Activated CD4-positive, alpha-beta T cell treated with anti-CD3 and anti-CD28 coated beads for 36 hours (primary cell): ENCODE measurements at regions of chr2 and their contacts with region 1.

Region 1: GRCh38 chr2:43611987-43612894 is 16.4 kb upstream of the THADA start:
- DNase-seq: peak; percentile 84
- ATAC-seq: peak; percentile 96
- H3K4me3 Mint-ChIP-seq: no peak overlapping the region
- H3K27ac Mint-ChIP-seq: peak overlapping the region; percentile 40
- H3K4me1 Mint-ChIP-seq: peaks cover 2% of the 10 kb centered on the region
- H3K27me3 Mint-ChIP-seq: peaks cover 5% of the 10 kb centered on the region

Region 2: GRCh38 chr2:42828487-42829425 is 783.5 kb before region 1 on chr2:
- CTCF ChIA-PET with region 1: interaction called, 3 read pairs
- POLR2A ChIA-PET with region 1: no interaction called
- intact Hi-C with region 1: loop called in 1 of 2 experiments (anchors 2 kb)
- DNase-seq: peak; percentile 84
- ATAC-seq: peak; percentile 92
- H3K4me3 Mint-ChIP-seq: no peak overlapping the region
- H3K27ac Mint-ChIP-seq: no peak overlapping the region
- H3K4me1 Mint-ChIP-seq: peaks cover 10% of the 10 kb centered on the region
- H3K27me3 Mint-ChIP-seq: no peaks in the 10 kb centered on the region

Region 3: GRCh38 chr2:42859006-42859552 is 753.2 kb before region 1 on chr2:
- CTCF ChIA-PET with region 1: no interaction called
- POLR2A ChIA-PET with region 1: no interaction called
- intact Hi-C with region 1: loop called in 1 of 2 experiments (anchors 2 kb)
- DNase-seq: peak; percentile 86
- ATAC-seq: peak; percentile 69
- H3K4me3 Mint-ChIP-seq: no peak overlapping the region
- H3K27ac Mint-ChIP-seq: no peak overlapping the region
- H3K4me1 Mint-ChIP-seq: peaks cover 5% of the 10 kb centered on the region
- H3K27me3 Mint-ChIP-seq: no peaks in the 10 kb centered on the region

Region 4: GRCh38 chr2:43877782-43878464 is 265.7 kb after region 1 on chr2:
- CTCF ChIA-PET with region 1: interaction called, 3 read pairs
- POLR2A ChIA-PET with region 1: no interaction called
- intact Hi-C with region 1: loop called (anchors 2 kb)
- DNase-seq: peak; percentile 84
- ATAC-seq: peak; percentile 88
- H3K4me3 Mint-ChIP-seq: no peak overlapping the region
- H3K27ac Mint-ChIP-seq: no peak overlapping the region
- H3K4me1 Mint-ChIP-seq: peaks cover 6% of the 10 kb centered on the region
- H3K27me3 Mint-ChIP-seq: peaks cover 11% of the 10 kb centered on the region

Region 5: DNA sequence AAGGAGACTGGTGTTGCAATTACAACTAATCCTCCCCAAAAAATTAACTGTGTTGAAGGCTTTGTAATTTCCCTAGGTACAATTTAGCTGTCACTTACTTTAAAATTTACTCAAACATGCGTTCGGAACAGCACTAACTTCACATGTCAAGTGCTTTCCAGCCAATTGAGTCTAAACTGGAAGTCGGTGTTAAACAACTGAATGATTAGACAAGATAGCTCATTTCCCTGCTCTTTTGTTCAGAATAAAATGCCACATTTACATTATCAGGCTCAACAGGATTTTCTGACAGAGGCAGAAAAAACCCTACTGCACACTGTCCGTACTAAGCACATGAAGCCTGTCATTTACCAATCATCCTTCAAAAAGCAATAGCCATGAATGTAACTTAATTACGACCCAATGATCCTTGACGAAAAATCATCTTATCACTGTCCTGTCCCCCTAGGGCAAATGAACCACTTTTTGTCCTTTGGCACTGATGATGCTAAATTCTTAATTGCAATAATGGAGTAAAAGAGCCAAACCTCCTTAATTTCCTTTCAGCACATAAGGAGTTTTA is 327.5 kb after region 1 on chr2:
- CTCF ChIA-PET with region 1: no interaction called
- POLR2A ChIA-PET with region 1: no interaction called
- intact Hi-C with region 1: loop called in 1 of 2 experiments (anchors 5 kb)
- DNase-seq: no peak
- ATAC-seq: no peak
- H3K4me3 Mint-ChIP-seq: no peak overlapping the region
- H3K27ac Mint-ChIP-seq: no peak overlapping the region
- H3K4me1 Mint-ChIP-seq: peaks cover 7% of the 10 kb centered on the region
- H3K27me3 Mint-ChIP-seq: no peaks in the 10 kb centered on the region

Region 6: DNA sequence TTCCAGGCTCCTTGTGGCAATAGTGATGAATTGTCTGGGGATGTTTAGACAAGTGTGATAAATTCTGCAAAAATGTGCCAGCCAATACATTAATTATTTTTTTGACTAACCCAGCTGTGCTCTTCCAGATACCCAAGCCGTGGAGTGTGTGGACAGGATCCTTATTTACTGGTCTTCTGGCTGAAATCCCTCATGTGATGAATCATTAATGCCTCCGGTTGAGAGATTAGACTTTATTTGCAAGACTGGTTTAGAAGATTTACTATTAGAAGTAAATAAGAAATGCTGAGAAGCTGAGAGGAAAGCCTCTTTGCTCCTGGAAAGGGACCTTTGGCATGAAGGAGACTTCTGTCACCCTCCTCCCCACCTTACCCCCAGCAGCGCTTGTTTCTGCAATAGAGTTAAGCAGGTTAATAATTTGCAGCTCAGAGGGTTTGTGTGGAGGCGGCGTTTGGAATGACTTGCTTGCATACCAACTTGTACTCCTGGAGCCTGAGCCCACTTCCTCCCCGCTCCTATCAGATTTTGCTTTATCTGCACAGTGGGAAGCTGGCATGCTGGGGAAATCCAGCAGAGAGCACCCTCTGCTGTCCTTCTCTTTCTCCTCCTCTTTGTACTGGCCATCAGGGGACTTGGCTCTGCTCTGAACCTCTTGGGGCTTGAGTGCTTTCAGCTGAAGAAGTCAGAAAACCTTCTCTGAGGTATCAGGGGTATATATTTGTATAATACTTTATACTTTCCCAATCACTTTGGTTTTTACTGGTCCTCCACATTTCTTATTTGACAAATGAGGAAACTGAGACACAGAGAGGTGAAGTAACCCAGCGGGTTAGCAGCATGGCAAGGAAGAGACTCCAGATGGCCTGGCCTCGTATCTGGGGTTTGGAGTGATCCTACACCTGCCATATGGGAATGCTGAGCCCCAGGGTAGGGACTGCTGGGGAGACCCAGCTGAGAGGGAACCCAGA is 679.3 kb after region 1 on chr2:
- CTCF ChIA-PET with region 1: no interaction called
- POLR2A ChIA-PET with region 1: no interaction called
- intact Hi-C with region 1: no loop called
- DNase-seq: peak; percentile 6
- ATAC-seq: no peak
- H3K4me3 Mint-ChIP-seq: no peak overlapping the region
- H3K27ac Mint-ChIP-seq: no peak overlapping the region
- H3K4me1 Mint-ChIP-seq: peaks cover 6% of the 10 kb centered on the region
- H3K27me3 Mint-ChIP-seq: peaks cover 5% of the 10 kb centered on the region